Naive thymus-derived CD4-positive, alpha-beta T cell (primary cell): ENCODE measurements at regions of chr9 and their contacts with region 1.

Region 1: DNA sequence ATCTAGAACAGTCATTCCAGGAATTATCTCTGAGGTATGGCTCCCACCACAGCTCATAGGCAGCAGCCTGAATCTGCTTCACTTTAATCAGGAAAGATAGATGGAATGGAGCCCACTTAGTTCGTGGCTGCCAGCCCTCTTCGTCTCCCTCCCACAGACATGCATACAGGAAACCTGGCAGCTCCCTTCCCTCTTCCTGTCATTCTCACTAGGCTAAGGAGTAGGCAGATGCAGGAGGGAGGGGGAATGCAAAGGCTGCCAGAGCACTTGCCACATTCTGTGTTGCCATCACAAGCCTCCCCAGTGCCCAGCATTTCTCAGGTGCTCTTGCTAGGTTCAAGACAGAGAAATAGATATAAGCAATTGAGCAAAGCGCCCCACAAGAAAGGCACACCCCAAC is 378.9 kb downstream of the ELAVL2 start:
- DNase-seq: no peak
- ATAC-seq: no peak
- H3K4me3 ChIP-seq: no peak overlapping the region
- H3K4me3 Mint-ChIP-seq: no peak overlapping the region
- H3K27ac ChIP-seq: no peak overlapping the region
- H3K27ac Mint-ChIP-seq: no peak overlapping the region
- H3K4me1 ChIP-seq: no peaks in the 10 kb centered on the region
- H3K4me1 Mint-ChIP-seq: no peaks in the 10 kb centered on the region
- H3K27me3 ChIP-seq: no peaks in the 10 kb centered on the region
- H3K27me3 Mint-ChIP-seq: no peaks in the 10 kb centered on the region

Region 2: DNA sequence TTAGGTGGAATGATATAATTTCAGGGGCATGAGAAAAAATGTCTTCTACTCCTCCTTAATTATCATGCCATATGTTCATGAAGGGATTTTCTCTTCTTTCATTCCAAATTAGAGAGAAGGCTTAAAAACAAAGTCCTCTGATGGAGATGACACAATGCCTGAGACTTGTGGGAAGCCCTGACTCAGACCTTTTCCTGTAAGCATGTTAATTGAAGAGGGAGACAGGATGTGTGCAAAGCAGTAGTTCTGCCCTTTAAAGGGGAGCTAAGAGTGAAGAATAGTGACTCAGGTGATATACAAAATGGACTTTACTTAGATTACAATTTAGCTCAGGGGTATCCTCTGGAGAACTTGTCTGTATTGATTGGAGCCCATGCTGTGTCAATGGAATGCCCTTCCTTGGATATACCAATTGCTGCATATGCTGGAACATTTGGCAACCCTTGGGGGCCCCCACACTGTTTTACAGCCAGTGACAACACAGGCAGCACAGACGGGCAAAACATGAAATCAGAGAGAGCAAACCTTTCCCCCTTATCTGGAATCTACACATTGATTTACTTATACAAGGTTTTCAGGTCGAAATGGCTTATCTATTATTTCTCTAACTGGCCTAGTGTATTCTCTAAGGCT is 1017.3 kb after region 1 on chr9:
- CTCF ChIA-PET with region 1: no interaction called
- POLR2A ChIA-PET with region 1: no interaction called
- intact Hi-C with region 1: loop called in 1 of 2 experiments (anchors 5 kb)
- DNase-seq: peak in 1 of 9 donors; percentile 0
- ATAC-seq: no peak
- H3K4me3 ChIP-seq: no peak overlapping the region
- H3K4me3 Mint-ChIP-seq: no peak overlapping the region
- H3K27ac ChIP-seq: no peak overlapping the region
- H3K27ac Mint-ChIP-seq: no peak overlapping the region
- H3K4me1 ChIP-seq: no peaks in the 10 kb centered on the region
- H3K4me1 Mint-ChIP-seq: peaks cover 0 to 1% (median 0%) of the 10 kb centered on the region in 7 donors
- H3K27me3 ChIP-seq: no peaks in the 10 kb centered on the region
- H3K27me3 Mint-ChIP-seq: no peaks in the 10 kb centered on the region